Caco-2 (cell line): ENCODE measurements at regions of chr5 and their contacts with region 1.

Region 1: GRCh38 chr5:169272731-169273401 is 28.1 kb downstream of the SLIT3 start:
- DNase-seq: no peak
- H3K4me3 ChIP-seq: no peak overlapping the region
- H3K4me3 Mint-ChIP-seq: peak overlapping the region; percentile 61
- H3K27ac Mint-ChIP-seq: peak overlapping the region; percentile 90
- H3K4me1 ChIP-seq: peaks cover 53% of the 10 kb centered on the region
- H3K4me1 Mint-ChIP-seq: peaks cover 62% of the 10 kb centered on the region
- H3K27me3 ChIP-seq: no peaks in the 10 kb centered on the region
- H3K27me3 Mint-ChIP-seq: no peaks in the 10 kb centered on the region
- CTCF ChIP-seq: no peak

Region 2: GRCh38 chr5:169185626-169186025 is 87.2 kb before region 1 on chr5:
- CTCF ChIA-PET with region 1: no interaction called
- POLR2A ChIA-PET with region 1: no interaction called
- intact Hi-C with region 1: loop called (anchors 2 kb)
- DNase-seq: peak in 1 of 2 experiments; percentile 19
- H3K4me3 ChIP-seq: no peak overlapping the region
- H3K4me3 Mint-ChIP-seq: no peak overlapping the region
- H3K27ac Mint-ChIP-seq: peak overlapping the region; percentile 85
- H3K4me1 ChIP-seq: peaks cover 17% of the 10 kb centered on the region
- H3K4me1 Mint-ChIP-seq: peaks cover 13% of the 10 kb centered on the region
- H3K27me3 ChIP-seq: no peaks in the 10 kb centered on the region
- H3K27me3 Mint-ChIP-seq: no peaks in the 10 kb centered on the region
- CTCF ChIP-seq: no peak

Region 3: GRCh38 chr5:169248996-169249395 is 23.9 kb before region 1 on chr5:
- CTCF ChIA-PET with region 1: interaction called, 3 read pairs
- POLR2A ChIA-PET with region 1: no interaction called
- intact Hi-C with region 1: loop called (anchors 1 kb)
- DNase-seq: peak; percentile 48 to 49
- H3K4me3 ChIP-seq: no peak overlapping the region
- H3K4me3 Mint-ChIP-seq: no peak overlapping the region
- H3K27ac Mint-ChIP-seq: peak overlapping the region; percentile 91
- H3K4me1 ChIP-seq: peaks cover 30% of the 10 kb centered on the region
- H3K4me1 Mint-ChIP-seq: peaks cover 64% of the 10 kb centered on the region
- H3K27me3 ChIP-seq: no peaks in the 10 kb centered on the region
- H3K27me3 Mint-ChIP-seq: no peaks in the 10 kb centered on the region
- CTCF ChIP-seq: no peak

Region 4: DNA sequence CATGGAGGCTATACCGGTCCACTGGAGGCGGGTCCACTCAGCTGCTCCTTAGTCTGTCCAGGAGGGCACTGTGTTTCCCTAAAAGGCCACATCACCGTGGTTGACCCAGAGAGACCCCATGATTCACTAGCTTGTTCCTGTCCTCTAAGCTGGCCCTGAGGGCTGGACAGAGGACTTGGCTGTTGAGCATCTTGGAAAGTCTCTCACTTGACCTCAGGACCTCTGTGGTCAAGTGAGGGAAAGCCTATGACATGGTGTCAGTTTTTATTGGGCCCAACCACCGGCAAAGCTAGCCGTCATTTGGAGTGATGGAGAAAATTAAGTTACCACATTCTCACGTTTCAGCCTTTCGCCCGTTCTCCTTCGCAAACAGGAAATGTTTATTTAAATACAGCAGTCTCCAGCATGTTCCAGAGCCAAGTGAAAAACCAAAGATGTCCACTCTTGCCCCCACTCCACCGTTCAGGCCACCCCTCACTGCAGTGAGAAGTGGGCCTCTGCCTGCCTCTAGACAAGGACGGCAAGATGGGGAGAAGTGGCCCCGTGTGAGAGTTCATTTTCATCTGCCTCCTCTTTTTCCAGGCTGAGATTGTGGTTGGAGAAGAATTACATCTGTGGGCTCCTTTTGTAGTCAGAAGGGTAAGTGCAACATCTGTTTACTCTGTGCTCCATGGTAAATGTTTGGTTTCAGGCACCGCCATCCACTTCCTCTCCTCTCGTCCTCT is 23.7 kb after region 1 on chr5:
- CTCF ChIA-PET with region 1: no interaction called
- POLR2A ChIA-PET with region 1: no interaction called
- intact Hi-C with region 1: loop called (anchors 1 kb)
- DNase-seq: peak in 1 of 2 experiments; percentile 29
- H3K4me3 ChIP-seq: no peak overlapping the region
- H3K4me3 Mint-ChIP-seq: peak overlapping the region; percentile 2
- H3K27ac Mint-ChIP-seq: peak overlapping the region; percentile 61
- H3K4me1 ChIP-seq: peaks cover 43% of the 10 kb centered on the region
- H3K4me1 Mint-ChIP-seq: peaks cover 42% of the 10 kb centered on the region
- H3K27me3 ChIP-seq: no peaks in the 10 kb centered on the region
- H3K27me3 Mint-ChIP-seq: no peaks in the 10 kb centered on the region
- CTCF ChIP-seq: no peak

Region 5: GRCh38 chr5:169302491-169303118 is 29.7 kb after region 1 on chr5:
- CTCF ChIA-PET with region 1: no interaction called
- POLR2A ChIA-PET with region 1: no interaction called
- intact Hi-C with region 1: loop called (anchors 1 kb)
- DNase-seq: peak; percentile 71 to 77
- H3K4me3 ChIP-seq: no peak overlapping the region
- H3K4me3 Mint-ChIP-seq: no peak overlapping the region
- H3K27ac Mint-ChIP-seq: peak overlapping the region; percentile 18
- H3K4me1 ChIP-seq: peaks cover 34% of the 10 kb centered on the region
- H3K4me1 Mint-ChIP-seq: peaks cover 45% of the 10 kb centered on the region
- H3K27me3 ChIP-seq: no peaks in the 10 kb centered on the region
- H3K27me3 Mint-ChIP-seq: no peaks in the 10 kb centered on the region
- CTCF ChIP-seq: peak; percentile 84 to 87